Activated B cell treated with CpG ODN at 0.5 μM for 24 hours (primary cell): ENCODE measurements at regions of chr1 and their contacts with region 1.

Region 1: DNA sequence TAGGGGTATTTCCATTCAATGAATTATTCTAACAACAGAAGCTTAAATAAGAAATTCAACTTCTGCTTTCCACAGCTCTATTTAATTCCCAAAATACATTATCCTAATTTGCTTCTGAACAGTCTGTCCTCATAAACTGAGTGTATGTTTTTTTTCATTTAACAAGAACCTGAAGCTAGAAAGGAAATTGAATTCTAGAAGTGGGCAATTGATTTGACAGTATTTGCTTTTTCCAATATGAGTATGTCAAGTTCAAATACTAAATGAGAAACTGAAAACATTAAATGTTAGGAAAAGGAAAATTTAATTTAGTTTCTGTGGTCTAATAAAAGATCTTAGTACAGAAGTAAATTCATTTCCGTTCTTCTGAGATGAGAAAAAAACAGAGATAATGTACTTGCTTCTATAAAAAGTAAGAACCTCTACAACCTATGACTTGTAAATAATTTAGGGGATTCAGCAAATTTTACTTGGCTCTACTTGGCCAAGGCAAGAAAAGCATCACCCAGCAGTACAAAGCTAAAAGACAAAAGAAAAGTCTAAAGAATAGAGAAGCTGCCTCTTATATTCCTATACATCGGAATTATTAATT is 31.1 kb downstream of the RAB3GAP2 start:
- DNase-seq: no peak
- ATAC-seq: no peak
- H3K4me3 Mint-ChIP-seq: peak overlapping the region; percentile 11
- H3K27ac Mint-ChIP-seq: no peak overlapping the region
- H3K4me1 Mint-ChIP-seq: peaks cover 50% of the 10 kb centered on the region
- H3K27me3 Mint-ChIP-seq: no peaks in the 10 kb centered on the region
- CTCF ChIP-seq: no peak

Region 2: GRCh38 chr1:219650880-219651279 is 590.3 kb before region 1 on chr1:
- CTCF ChIA-PET with region 1: no interaction called
- POLR2A ChIA-PET with region 1: no interaction called
- intact Hi-C with region 1: no loop called
- DNase-seq: no peak
- ATAC-seq: no peak
- H3K4me3 Mint-ChIP-seq: no peak overlapping the region
- H3K27ac Mint-ChIP-seq: no peak overlapping the region
- H3K4me1 Mint-ChIP-seq: no peaks in the 10 kb centered on the region
- H3K27me3 Mint-ChIP-seq: peaks cover 9% of the 10 kb centered on the region
- CTCF ChIP-seq: no peak

Region 3: DNA sequence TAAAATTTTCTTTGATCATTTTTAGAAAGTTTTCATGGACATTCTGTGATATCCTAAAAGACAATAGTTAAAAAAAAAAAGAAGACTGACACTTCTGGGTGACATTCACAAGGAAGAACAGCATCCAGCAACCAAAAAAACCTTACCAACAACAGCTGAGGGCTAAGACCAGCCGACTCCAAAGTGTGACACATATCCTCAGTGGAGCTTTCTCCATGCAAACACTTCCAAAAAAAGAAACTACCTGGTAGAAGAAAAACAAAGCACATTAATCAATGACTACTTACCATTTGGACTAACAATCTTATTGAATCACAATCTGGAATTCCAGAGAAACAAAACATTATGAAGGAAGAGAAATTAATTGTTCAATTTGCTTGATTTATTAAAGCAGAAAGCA is 59.1 kb before region 1 on chr1:
- CTCF ChIA-PET with region 1: no interaction called
- POLR2A ChIA-PET with region 1: no interaction called
- intact Hi-C with region 1: no loop called
- DNase-seq: no peak
- ATAC-seq: no peak
- H3K4me3 Mint-ChIP-seq: no peak overlapping the region
- H3K27ac Mint-ChIP-seq: no peak overlapping the region
- H3K4me1 Mint-ChIP-seq: no peaks in the 10 kb centered on the region
- H3K27me3 Mint-ChIP-seq: no peaks in the 10 kb centered on the region
- CTCF ChIP-seq: no peak

Region 4: DNA sequence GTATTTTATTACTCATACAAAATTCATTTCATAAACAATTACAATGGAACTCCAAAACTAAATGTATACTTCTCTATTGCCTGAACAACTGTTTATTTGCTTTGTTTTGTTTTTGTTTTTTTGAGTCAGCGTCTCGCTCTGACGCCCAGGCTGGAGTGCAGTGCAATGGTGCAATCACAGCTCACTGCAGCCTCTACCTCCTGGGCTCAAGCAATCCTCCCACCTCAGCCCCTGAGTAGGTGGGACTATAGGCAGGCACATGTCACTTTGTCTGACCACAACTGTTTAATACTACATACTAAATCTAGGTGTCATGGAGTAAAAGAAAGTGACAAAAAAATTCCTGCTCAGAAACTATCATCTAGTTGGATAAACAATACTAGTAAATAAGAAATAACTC is 18.2 kb before region 1 on chr1:
- CTCF ChIA-PET with region 1: interaction called, 3 read pairs
- POLR2A ChIA-PET with region 1: interaction called, 4 read pairs
- intact Hi-C with region 1: loop called (anchors 1 kb)
- DNase-seq: no peak
- ATAC-seq: no peak
- H3K4me3 Mint-ChIP-seq: peak overlapping the region; percentile 67
- H3K27ac Mint-ChIP-seq: peak overlapping the region; percentile 86
- H3K4me1 Mint-ChIP-seq: peaks cover 91% of the 10 kb centered on the region
- H3K27me3 Mint-ChIP-seq: no peaks in the 10 kb centered on the region
- CTCF ChIP-seq: no peak

Region 5: DNA sequence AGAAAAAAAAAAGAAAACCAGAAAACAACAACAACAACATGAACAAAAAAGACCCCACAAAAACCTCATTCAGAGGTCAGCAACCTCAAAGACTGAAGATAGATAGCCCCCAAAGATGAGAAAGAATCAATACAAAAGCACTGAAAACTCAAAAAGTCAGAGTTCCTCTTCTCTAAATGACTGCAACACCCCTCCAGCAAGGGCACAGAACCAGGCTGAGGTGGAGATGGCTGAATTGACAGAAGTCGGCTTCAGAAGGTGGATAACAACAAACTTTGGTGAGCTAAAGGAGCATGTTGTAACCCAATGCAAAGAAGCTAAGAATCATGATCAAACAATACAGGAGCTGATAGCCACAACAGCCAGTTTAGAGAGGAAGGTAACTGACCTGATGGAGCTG is 14.0 kb after region 1 on chr1:
- CTCF ChIA-PET with region 1: no interaction called
- POLR2A ChIA-PET with region 1: no interaction called
- intact Hi-C with region 1: loop called (anchors 2 kb)
- DNase-seq: no peak
- ATAC-seq: peak; percentile 47
- H3K4me3 Mint-ChIP-seq: peak overlapping the region; percentile 51
- H3K27ac Mint-ChIP-seq: peak overlapping the region; percentile 80
- H3K4me1 Mint-ChIP-seq: peaks cover 77% of the 10 kb centered on the region
- H3K27me3 Mint-ChIP-seq: no peaks in the 10 kb centered on the region
- CTCF ChIP-seq: no peak

Region 6: DNA sequence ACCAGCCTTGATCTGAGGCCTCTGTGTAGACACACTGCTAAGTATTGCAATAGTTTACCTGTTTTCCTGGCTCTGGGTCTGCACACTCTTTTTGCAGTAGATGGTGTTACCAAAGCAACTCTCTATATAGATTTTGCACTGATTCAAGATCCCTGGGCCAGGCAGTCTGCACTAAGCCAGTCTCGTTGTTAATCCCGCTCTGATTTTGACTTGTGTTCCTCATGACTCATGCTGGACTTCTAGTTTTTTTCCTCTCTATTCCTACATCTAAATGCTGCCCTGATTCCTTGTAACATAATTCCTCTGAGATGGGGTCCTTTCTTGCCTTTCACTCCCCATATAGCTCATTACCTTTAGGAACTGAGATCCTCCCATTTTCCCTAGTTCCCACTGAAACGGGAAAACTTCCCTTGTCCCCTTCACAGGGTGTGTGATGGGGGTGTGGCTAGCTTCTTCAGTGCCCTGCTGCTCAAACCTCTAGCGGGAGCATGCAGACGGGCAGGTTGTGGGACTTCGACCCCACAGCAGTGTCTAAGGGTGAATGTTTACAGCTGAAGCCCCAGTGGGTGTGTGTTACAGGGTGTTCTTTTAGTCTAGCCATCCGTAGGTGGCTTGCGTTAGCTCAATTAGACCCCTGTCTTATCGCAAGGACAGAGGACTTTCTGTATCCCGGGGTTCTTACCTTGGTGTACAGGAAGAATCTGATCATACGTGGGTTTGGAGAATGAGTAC is 137.6 kb after region 1 on chr1:
- CTCF ChIA-PET with region 1: no interaction called
- POLR2A ChIA-PET with region 1: no interaction called
- intact Hi-C with region 1: no loop called
- DNase-seq: no peak
- ATAC-seq: no peak
- H3K4me3 Mint-ChIP-seq: no peak overlapping the region
- H3K27ac Mint-ChIP-seq: no peak overlapping the region
- H3K4me1 Mint-ChIP-seq: peaks cover 7% of the 10 kb centered on the region
- H3K27me3 Mint-ChIP-seq: no peaks in the 10 kb centered on the region
- CTCF ChIP-seq: no peak